GM10248 (cell line): ENCODE measurements at regions of chr5 and their contacts with region 1.

Region 1: GRCh38 chr5:11268891-11269290 is 507.9 kb upstream of the DAP start:
- DNase-seq: no peak
- CTCF ChIP-seq: no peak

Region 2: DNA sequence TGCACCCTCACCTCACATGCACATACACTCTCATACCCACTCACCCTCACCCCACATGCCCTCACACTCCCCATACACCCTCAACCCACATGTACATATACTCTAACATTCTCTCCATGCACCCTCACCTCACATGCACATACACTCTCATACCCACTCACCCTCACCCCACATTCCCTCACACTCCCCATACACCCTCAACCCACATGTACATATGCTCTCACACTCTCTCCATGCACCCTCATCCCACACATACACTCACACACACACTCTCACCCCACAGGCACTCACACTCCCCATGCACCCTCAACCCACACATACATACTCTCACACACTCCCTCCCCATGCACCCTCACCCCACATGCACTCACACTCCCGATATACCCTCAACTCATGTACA is 42.4 kb after region 1 on chr5:
- CTCF ChIA-PET with region 1: no interaction called
- POLR2A ChIA-PET with region 1: no interaction called
- DNase-seq: no peak
- CTCF ChIP-seq: no peak

Region 3: GRCh38 chr5:12023614-12024241 is 754.8 kb after region 1 on chr5:
- CTCF ChIA-PET with region 1: interaction called, 15 read pairs
- POLR2A ChIA-PET with region 1: no interaction called
- DNase-seq: peak; percentile 11
- CTCF ChIP-seq: peak; percentile 46